ENCODE measurements at regions of chr4 and their contacts with region 1.

Region 1: GRCh38 chr4:184733654-184734524 is at the start of gene CENPU:
- DNase-seq: peak; percentile 98
- H3K4me3 Mint-ChIP-seq: peak within 1 kb of the TSS; percentile 87
- H3K27ac Mint-ChIP-seq: peak within 1 kb of the TSS; percentile 73
- H3K4me1 Mint-ChIP-seq: peaks cover 26% of the 10 kb centered on the region
- H3K27me3 Mint-ChIP-seq: no peaks in the 10 kb centered on the region
- CTCF ChIP-seq: no peak
- total RNA-seq, gene CENPU: 8.3 and 22.3 TPM in 2 replicates

Region 2: DNA sequence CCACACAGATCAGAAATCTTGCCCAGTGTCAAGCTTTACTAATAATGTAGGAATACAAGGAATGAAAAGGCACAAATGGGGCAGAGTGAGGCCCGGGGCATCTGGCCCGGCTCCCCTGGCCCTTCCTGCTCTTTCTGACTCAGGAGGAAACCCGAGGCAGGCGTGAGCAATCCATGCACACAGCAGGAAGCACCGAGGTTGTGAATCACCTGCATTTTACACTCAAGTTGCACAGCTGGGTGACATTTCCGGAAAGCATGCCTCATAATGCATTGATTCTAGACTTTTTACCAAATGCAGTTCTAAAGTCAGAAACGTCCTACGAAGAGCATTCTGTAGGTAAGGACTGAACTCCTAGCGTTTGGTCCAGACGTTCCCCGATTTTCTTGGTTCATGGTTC is 45.4 kb before region 1 on chr4:
- CTCF ChIA-PET with region 1: interaction called, 3 read pairs
- POLR2A ChIA-PET with region 1: interaction called, 7 read pairs
- intact Hi-C with region 1: loop called (anchors 1 kb)
- DNase-seq: peak; percentile 93
- H3K4me3 Mint-ChIP-seq: peak overlapping the region; percentile 43
- H3K27ac Mint-ChIP-seq: peak overlapping the region; percentile 83
- H3K4me1 Mint-ChIP-seq: peaks cover 24% of the 10 kb centered on the region
- H3K27me3 Mint-ChIP-seq: no peaks in the 10 kb centered on the region
- CTCF ChIP-seq: no peak

Region 3: DNA sequence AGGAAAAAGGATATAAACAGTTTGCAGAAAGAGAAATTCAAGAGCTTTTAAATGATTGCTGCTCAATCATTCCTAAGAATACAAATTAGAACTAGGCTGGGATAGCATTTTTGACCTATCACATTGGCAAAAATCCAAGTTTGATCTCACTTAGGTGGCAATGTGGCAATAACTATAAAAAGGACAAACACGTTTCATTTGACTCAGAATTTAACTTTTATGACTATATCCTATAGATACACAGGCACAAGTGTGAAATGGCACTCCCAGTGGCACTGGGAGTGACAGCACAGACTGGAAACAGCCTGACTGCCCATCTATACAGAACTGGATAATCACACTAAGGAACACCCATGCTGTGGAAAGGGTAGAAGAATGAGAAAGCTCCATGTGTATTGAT is 11.1 kb before region 1 on chr4:
- CTCF ChIA-PET with region 1: interaction called, 7 read pairs
- POLR2A ChIA-PET with region 1: interaction called, 27 read pairs
- intact Hi-C with region 1: no loop called
- DNase-seq: no peak
- H3K4me3 Mint-ChIP-seq: no peak overlapping the region
- H3K27ac Mint-ChIP-seq: no peak overlapping the region
- H3K4me1 Mint-ChIP-seq: no peaks in the 10 kb centered on the region
- H3K27me3 Mint-ChIP-seq: no peaks in the 10 kb centered on the region
- CTCF ChIP-seq: no peak

Region 4: GRCh38 chr4:184792950-184793555 is 59.2 kb after region 1 on chr4:
- CTCF ChIA-PET with region 1: interaction called, 4 read pairs
- POLR2A ChIA-PET with region 1: interaction called, 4 read pairs
- intact Hi-C with region 1: loop called (anchors 2 kb)
- DNase-seq: peak; percentile 93
- H3K4me3 Mint-ChIP-seq: no peak overlapping the region
- H3K27ac Mint-ChIP-seq: peak overlapping the region; percentile 67
- H3K4me1 Mint-ChIP-seq: peaks cover 58% of the 10 kb centered on the region
- H3K27me3 Mint-ChIP-seq: no peaks in the 10 kb centered on the region
- CTCF ChIP-seq: no peak

Region 5: DNA sequence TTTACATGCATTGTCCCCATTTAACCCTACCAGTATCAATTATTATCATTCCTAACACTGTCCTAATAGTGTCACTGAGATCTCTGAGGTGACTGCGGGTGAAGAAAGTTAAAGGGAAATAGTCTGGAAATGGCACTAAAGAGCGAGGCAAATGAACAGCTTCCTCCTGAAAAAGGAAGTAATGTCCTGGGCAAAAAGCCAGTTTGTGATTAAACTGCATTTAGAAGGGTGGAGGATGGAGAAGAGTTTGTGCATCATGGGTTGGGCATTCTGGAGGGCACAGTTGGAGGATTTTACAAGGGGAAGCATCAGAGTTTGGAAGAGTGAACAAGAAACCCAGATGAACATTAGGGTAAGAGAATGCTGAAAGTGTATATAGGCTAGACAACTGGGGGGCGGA is 348.7 kb after region 1 on chr4:
- CTCF ChIA-PET with region 1: no interaction called
- POLR2A ChIA-PET with region 1: no interaction called
- intact Hi-C with region 1: no loop called
- DNase-seq: peak; percentile 6
- H3K4me3 Mint-ChIP-seq: no peak overlapping the region
- H3K27ac Mint-ChIP-seq: no peak overlapping the region
- H3K4me1 Mint-ChIP-seq: peaks cover 5% of the 10 kb centered on the region
- H3K27me3 Mint-ChIP-seq: no peaks in the 10 kb centered on the region
- CTCF ChIP-seq: no peak

Measured in MCF 10A (cell line).